ENCODE measurements at regions of chr17 and their contacts with region 1.

Region 1: GRCh38 chr17:67434061-67434525 is 57.0 kb downstream of the PITPNC1 start:
- DNase-seq: peak; percentile 57 to 89
- ATAC-seq: peak; percentile 68 to 74 (median 69)
- H3K4me3 ChIP-seq: no peak overlapping the region
- H3K4me3 Mint-ChIP-seq: peak overlapping the region; percentile 70
- H3K27ac ChIP-seq: peak overlapping the region; percentile 98
- H3K27ac Mint-ChIP-seq: peak overlapping the region; percentile 90 to 95
- H3K4me1 ChIP-seq: peaks cover 58% of the 10 kb centered on the region
- H3K4me1 Mint-ChIP-seq: peaks cover 66 to 75% of the 10 kb centered on the region in 2 donors
- H3K27me3 ChIP-seq: no peaks in the 10 kb centered on the region
- H3K27me3 Mint-ChIP-seq: no peaks in the 10 kb centered on the region
- CTCF ChIP-seq: no peak

Region 2: DNA sequence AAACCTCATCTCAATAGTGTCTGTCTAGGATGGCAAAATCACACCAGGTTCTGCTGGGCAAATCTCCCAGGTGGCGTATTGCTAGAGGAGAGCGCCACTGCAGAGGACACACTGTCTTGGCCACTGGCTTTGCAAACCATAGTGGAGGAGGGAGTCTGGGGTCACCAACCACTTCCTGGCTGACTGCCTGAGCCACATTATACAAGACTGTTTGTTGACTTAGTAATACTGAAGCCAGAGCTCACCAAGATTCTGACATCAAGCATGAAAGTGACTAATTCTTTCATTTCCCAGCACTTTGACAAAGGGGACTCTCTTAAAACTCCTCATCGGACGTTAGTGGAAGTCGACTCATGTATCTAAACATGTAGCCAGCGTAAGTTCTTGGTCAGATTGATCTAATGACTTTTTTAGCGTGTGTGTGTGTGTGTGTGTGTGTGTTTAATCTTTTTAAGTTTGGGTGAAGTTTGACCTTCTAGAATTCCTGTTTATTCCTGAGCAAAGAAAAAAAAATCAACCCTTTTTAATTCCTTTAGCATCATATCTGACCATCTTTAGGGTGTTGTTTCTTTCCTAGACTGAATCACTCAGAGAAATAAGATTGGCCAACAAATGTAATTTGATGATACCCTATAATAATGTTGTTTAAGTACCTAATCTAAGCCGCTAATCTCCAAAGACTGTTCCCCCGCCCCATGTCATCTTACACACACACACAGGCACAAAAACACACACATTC is 43.3 kb before region 1 on chr17:
- intact Hi-C with region 1: loop called (anchors 1 kb)
- DNase-seq: peak; percentile 75
- ATAC-seq: peak; percentile 77 to 92 (median 88)
- H3K4me3 ChIP-seq: peak overlapping the region; percentile 30
- H3K4me3 Mint-ChIP-seq: peak overlapping the region; percentile 89
- H3K27ac ChIP-seq: peak overlapping the region; percentile 91
- H3K27ac Mint-ChIP-seq: peak overlapping the region; percentile 96 to 99
- H3K4me1 ChIP-seq: peaks cover 82% of the 10 kb centered on the region
- H3K4me1 Mint-ChIP-seq: peaks cover 84 to 87% of the 10 kb centered on the region in 2 donors
- H3K27me3 ChIP-seq: no peaks in the 10 kb centered on the region
- H3K27me3 Mint-ChIP-seq: no peaks in the 10 kb centered on the region
- CTCF ChIP-seq: no peak

Region 3: DNA sequence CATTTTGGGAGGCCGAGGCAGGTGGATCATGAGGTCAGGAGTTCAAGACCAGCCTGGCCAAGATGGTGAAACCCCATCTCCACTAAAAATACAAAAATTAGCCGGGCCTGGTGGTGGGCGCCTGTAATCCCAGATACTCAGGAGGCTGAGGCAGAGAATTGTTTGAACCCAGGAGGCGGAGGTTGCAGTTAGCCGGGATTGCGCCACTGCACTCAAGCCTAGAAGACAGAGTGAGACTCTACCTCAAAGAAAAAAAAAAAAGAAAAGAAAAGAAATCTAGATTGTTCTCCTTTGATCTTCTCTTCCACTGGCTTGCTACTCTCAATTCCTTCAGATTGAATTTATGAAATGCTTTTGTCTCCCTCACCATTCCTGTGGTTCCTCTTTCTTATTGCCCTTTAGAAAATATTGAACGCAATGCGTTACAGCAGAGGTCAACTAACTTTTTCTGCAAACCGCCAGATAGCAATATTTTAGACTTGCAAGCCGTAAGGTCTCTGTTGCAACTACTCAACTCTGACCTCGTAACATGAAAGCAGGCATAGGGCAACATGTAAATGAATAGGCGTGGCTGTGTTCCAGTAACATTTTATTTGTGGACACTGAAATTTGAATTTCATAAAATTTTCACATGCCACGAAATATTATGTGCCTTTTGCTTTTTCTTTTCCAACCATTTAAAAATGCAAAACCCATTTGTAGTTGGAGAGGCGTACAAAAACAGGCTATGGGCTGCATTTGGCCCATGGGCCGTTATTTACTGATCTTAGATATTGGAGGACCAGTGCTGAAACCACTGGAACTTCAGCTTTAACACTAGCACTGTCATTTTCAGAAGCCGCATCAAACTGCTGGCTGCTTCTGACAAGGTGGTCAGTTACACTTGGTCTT is 32.2 kb before region 1 on chr17:
- intact Hi-C with region 1: loop called (anchors 2 kb)
- DNase-seq: peak in 1 of 2 donors; percentile 33
- ATAC-seq: peak in 2 of 3 donors; percentile 21 to 32
- H3K4me3 ChIP-seq: no peak overlapping the region
- H3K4me3 Mint-ChIP-seq: peak overlapping the region; percentile 75
- H3K27ac ChIP-seq: peak overlapping the region; percentile 86
- H3K27ac Mint-ChIP-seq: peak overlapping the region; percentile 93 to 97
- H3K4me1 ChIP-seq: peaks cover 48% of the 10 kb centered on the region
- H3K4me1 Mint-ChIP-seq: peaks cover 66 to 80% of the 10 kb centered on the region in 2 donors
- H3K27me3 ChIP-seq: no peaks in the 10 kb centered on the region
- H3K27me3 Mint-ChIP-seq: no peaks in the 10 kb centered on the region
- CTCF ChIP-seq: no peak

Region 4: DNA sequence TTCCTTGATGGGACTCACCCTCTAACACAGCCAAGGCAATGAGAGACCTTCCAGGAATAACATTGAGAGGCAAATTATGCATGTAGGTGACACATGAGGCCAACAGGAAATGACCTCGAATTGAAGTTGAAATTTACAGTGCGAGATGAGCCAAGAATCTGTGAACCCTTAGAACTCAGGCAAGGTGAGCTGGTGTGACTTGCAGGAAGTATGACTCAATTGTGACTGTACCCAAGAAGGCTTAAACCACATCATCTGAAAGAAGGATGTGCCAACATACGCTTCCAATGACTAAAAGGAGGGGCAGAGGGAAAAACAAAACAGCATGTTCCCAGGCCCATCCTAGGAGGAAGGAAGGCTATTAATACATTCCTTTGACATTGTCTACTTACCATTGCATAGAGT is 12.2 kb before region 1 on chr17:
- intact Hi-C with region 1: loop called (anchors 1 kb)
- DNase-seq: peak in 1 of 2 donors; percentile 93
- ATAC-seq: peak; percentile 87 to 95 (median 95)
- H3K4me3 ChIP-seq: no peak overlapping the region
- H3K4me3 Mint-ChIP-seq: peak overlapping the region; percentile 67
- H3K27ac ChIP-seq: peak overlapping the region; percentile 80
- H3K27ac Mint-ChIP-seq: peak overlapping the region; percentile 88
- H3K4me1 ChIP-seq: peaks cover 62% of the 10 kb centered on the region
- H3K4me1 Mint-ChIP-seq: peaks cover 81 to 89% of the 10 kb centered on the region in 2 donors
- H3K27me3 ChIP-seq: no peaks in the 10 kb centered on the region
- H3K27me3 Mint-ChIP-seq: no peaks in the 10 kb centered on the region
- CTCF ChIP-seq: no peak

Region 5: DNA sequence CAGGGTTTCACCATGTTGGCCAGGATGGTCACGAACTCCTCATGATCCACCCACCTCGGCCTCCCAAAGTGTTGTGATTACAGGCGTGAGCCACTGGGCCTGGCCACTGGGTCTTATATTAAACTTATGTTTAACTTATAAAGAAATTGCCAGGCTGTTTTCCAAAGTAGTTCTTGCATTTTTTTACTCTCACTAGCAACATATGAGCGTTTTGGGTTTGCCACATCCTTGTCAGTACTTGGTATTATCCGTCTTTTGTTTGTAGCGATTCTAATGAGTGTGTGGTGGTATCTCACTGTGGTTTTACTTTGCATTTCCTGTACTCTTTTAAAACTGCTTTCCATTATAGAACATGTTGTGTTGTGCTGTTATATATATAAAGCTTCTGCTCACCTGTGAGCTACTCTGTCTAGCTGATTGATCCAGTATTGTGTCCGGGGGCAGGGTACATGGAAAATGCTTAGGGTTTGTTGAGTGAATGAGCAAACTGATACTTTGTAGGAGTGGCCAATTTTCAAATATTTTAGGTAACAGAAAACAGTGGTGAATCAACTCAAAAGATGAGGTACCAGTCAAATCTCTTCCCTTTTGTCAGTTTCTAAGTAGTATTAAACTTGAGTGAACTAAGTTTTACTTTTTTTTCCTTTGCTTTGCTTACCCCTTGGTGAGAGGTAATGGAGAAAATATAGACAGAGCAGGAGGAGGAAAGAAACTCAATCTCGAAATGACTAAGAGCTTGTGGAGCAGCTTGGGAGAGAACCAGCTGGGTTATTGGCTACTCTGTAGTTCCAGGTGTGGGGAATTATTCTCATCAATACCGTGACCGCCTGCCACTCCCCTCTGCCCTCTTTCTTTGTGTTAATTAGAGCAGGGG is 18.8 kb after region 1 on chr17:
- intact Hi-C with region 1: loop called (anchors 1 kb)
- DNase-seq: peak in 1 of 2 donors; percentile 81
- ATAC-seq: peak; percentile 68 to 83 (median 82)
- H3K4me3 ChIP-seq: no peak overlapping the region
- H3K4me3 Mint-ChIP-seq: peak overlapping the region; percentile 82
- H3K27ac ChIP-seq: peak overlapping the region; percentile 92
- H3K27ac Mint-ChIP-seq: peak overlapping the region; percentile 97
- H3K4me1 ChIP-seq: peaks cover 72% of the 10 kb centered on the region
- H3K4me1 Mint-ChIP-seq: peaks cover 88 to 93% of the 10 kb centered on the region in 2 donors
- H3K27me3 ChIP-seq: no peaks in the 10 kb centered on the region
- H3K27me3 Mint-ChIP-seq: no peaks in the 10 kb centered on the region
- CTCF ChIP-seq: no peak

Region 6: GRCh38 chr17:67475236-67475937 is 41.3 kb after region 1 on chr17:
- intact Hi-C with region 1: loop called (anchors 1 kb)
- DNase-seq: peak; percentile 79 to 95
- ATAC-seq: peak; percentile 78 to 95 (median 85)
- H3K4me3 ChIP-seq: no peak overlapping the region
- H3K4me3 Mint-ChIP-seq: peak overlapping the region; percentile 65
- H3K27ac ChIP-seq: peak overlapping the region; percentile 83
- H3K27ac Mint-ChIP-seq: peak overlapping the region; percentile 89 to 94
- H3K4me1 ChIP-seq: peaks cover 66% of the 10 kb centered on the region
- H3K4me1 Mint-ChIP-seq: peaks cover 61 to 62% of the 10 kb centered on the region in 2 donors
- H3K27me3 ChIP-seq: no peaks in the 10 kb centered on the region
- H3K27me3 Mint-ChIP-seq: no peaks in the 10 kb centered on the region
- CTCF ChIP-seq: peak; percentile 91

Region 7: GRCh38 chr17:67488161-67488560 is 54.1 kb after region 1 on chr17:
- intact Hi-C with region 1: loop called (anchors 2 kb)
- DNase-seq: no peak
- ATAC-seq: no peak
- H3K4me3 ChIP-seq: no peak overlapping the region
- H3K4me3 Mint-ChIP-seq: peak overlapping the region; percentile 84
- H3K27ac ChIP-seq: no peak overlapping the region
- H3K27ac Mint-ChIP-seq: peak overlapping the region; percentile 86 to 93
- H3K4me1 ChIP-seq: peaks cover 70% of the 10 kb centered on the region
- H3K4me1 Mint-ChIP-seq: peaks cover 81 to 85% of the 10 kb centered on the region in 2 donors
- H3K27me3 ChIP-seq: no peaks in the 10 kb centered on the region
- H3K27me3 Mint-ChIP-seq: no peaks in the 10 kb centered on the region
- CTCF ChIP-seq: no peak

Region 8: DNA sequence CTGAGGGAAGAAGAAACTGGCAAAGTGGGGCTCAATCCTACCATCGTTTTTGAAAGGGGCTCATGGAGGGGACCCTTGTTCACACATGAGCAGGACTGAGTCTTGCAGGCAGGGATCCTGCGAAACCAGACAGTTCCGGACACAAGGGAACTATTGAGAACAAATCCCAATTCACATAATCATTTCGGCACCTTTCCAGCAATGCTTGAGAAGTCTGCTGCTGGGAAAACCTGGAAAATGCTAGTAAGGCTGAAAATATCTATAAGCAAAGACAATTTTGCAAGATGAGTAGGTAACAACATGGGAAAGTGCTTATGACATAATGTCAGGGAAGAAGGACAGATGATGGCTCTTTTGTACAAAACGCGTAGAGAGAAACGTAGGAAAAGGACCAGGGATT is 339.2 kb after region 1 on chr17:
- intact Hi-C with region 1: no loop called
- DNase-seq: no peak
- ATAC-seq: no peak
- H3K4me3 ChIP-seq: no peak overlapping the region
- H3K4me3 Mint-ChIP-seq: no peak overlapping the region
- H3K27ac ChIP-seq: no peak overlapping the region
- H3K27ac Mint-ChIP-seq: no peak overlapping the region
- H3K4me1 ChIP-seq: no peaks in the 10 kb centered on the region
- H3K4me1 Mint-ChIP-seq: no peaks in the 10 kb centered on the region
- H3K27me3 ChIP-seq: no peaks in the 10 kb centered on the region
- H3K27me3 Mint-ChIP-seq: no peaks in the 10 kb centered on the region
- CTCF ChIP-seq: no peak

Measured in natural killer cell (primary cell).